ENCODE measurements at regions of chr7 and their contacts with region 1.

Region 1: DNA sequence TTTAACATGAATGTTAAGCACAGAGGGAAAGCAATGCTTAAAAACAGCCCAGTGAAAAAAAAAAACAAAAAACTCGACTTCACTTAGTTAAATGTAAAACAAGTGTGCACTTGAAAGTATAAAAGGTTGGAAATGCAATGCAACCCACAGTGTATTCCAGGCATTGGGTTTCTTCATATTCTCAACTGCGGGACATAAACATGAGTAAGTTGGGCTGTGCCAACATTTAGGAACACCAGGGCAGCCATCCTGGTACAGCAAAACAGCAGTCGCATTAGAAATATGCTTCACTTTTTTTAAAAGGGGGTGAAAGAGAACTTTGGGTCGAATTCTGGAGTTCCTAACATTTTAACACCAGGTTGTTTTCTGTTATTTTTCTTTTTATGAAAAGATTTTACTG is 937 bp downstream of the STEAP1 start:
- DNase-seq: no peak
- ATAC-seq: no peak
- H3K4me3 ChIP-seq: peak overlapping the region; percentile 13 to 82 (median 74); a peak in 3 of 6 replicates
- H3K27ac ChIP-seq: no peak overlapping the region
- H3K4me1 ChIP-seq: peaks cover 16% of the 10 kb centered on the region
- H3K27me3 ChIP-seq: no peaks in the 10 kb centered on the region
- CTCF ChIP-seq: no peak
- EP300 ChIP-seq: no peak
- POLR2A ChIP-seq: no peak
- RAD21 ChIP-seq: no peak

Region 2: GRCh38 chr7:90173127-90173844 is 18.1 kb after region 1 on chr7:
- CTCF ChIA-PET with region 1: no interaction called
- POLR2A ChIA-PET with region 1: interaction called, 14 read pairs
- in situ Hi-C with region 1: no loop called
- intact Hi-C with region 1: loop called (anchors 2 kb)
- DNase-seq: peak; percentile 77
- ATAC-seq: peak; percentile 98
- H3K4me3 ChIP-seq: peak overlapping the region; percentile 29 to 49 (median 49); a peak in 5 of 6 replicates
- H3K27ac ChIP-seq: peak overlapping the region; percentile 85
- H3K4me1 ChIP-seq: peaks cover 35% of the 10 kb centered on the region
- H3K27me3 ChIP-seq: no peaks in the 10 kb centered on the region
- CTCF ChIP-seq: no peak
- EP300 ChIP-seq: peak in 1 of 2 experiments; percentile 57; a peak in 2 of 4 replicates
- POLR2A ChIP-seq: no peak
- RAD21 ChIP-seq: no peak

Region 3: DNA sequence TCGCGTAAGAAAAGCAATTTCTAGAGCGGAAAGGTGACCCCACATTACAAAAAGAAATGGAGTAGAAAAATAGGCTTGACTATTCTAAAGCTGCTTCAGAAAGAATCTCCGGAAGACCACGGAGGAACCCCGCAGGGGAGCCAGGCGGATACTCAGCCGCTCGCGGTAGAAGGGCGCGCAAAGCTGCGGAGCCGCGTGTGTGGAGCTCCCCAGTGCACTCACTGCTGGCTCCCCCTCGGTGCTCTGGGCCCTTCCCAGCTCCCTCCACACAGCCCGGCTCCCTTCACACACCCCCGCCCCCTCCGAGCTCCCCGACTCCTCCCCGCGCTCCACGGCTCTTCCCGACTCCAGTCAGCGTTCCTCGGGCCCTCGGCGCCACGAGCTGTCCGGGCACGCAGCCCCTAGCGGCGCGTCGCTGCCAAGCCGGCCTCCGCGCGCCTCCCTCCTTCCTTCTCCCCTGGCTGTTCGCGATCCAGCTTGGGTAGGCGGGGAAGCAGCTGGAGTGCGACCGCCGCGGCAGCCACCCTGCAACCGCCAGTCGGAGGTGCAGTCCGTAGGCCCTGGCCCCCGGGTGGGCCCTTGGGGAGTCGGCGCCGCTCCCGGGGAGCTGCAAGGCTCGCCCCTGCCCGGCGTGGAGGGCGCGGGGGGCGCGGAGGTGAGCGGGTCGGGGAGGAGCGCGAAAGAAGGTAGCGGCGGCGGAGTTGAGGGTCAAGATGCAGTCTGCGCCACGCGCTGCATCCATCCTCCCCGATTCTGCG is 56.4 kb after region 1 on chr7 and contains the start of gene STEAP2:
- CTCF ChIA-PET with region 1: interaction called, 20 read pairs
- POLR2A ChIA-PET with region 1: interaction called, 51 read pairs
- in situ Hi-C with region 1: no loop called
- intact Hi-C with region 1: loop called (anchors 1 kb)
- DNase-seq: peak; percentile 81
- ATAC-seq: peak; percentile 98
- H3K4me3 ChIP-seq: peak within 1 kb of the TSS; percentile 65 to 87 (median 83)
- H3K27ac ChIP-seq: peak within 1 kb of the TSS; percentile 94
- H3K4me1 ChIP-seq: peaks cover 30% of the 10 kb centered on the region
- H3K27me3 ChIP-seq: peaks cover 0 to 5% of the 10 kb centered on the region in 2 experiments; a peak in 1 of 5 replicates
- CTCF ChIP-seq: peak; percentile 91
- EP300 ChIP-seq: peak in 1 of 2 experiments; percentile 41; a peak in 1 of 4 replicates
- POLR2A ChIP-seq: peak; percentile 80 to 86
- RAD21 ChIP-seq: peak; percentile 79
- total RNA-seq, gene STEAP2: 3.5 and 4.3 TPM in 2 replicates

Region 4: GRCh38 chr7:90262438-90262837 is 107.2 kb after region 1 on chr7:
- CTCF ChIA-PET with region 1: interaction called, 19 read pairs
- POLR2A ChIA-PET with region 1: interaction called, 4 read pairs
- in situ Hi-C with region 1: loop called (anchors 10 kb)
- intact Hi-C with region 1: loop called (anchors 1 kb)
- DNase-seq: no peak
- ATAC-seq: peak; percentile 74
- H3K4me3 ChIP-seq: no peak overlapping the region
- H3K27ac ChIP-seq: no peak overlapping the region
- H3K4me1 ChIP-seq: peaks cover 16% of the 10 kb centered on the region
- H3K27me3 ChIP-seq: no peaks in the 10 kb centered on the region
- CTCF ChIP-seq: peak; percentile 51
- EP300 ChIP-seq: no peak
- POLR2A ChIP-seq: no peak
- RAD21 ChIP-seq: no peak

Region 5: DNA sequence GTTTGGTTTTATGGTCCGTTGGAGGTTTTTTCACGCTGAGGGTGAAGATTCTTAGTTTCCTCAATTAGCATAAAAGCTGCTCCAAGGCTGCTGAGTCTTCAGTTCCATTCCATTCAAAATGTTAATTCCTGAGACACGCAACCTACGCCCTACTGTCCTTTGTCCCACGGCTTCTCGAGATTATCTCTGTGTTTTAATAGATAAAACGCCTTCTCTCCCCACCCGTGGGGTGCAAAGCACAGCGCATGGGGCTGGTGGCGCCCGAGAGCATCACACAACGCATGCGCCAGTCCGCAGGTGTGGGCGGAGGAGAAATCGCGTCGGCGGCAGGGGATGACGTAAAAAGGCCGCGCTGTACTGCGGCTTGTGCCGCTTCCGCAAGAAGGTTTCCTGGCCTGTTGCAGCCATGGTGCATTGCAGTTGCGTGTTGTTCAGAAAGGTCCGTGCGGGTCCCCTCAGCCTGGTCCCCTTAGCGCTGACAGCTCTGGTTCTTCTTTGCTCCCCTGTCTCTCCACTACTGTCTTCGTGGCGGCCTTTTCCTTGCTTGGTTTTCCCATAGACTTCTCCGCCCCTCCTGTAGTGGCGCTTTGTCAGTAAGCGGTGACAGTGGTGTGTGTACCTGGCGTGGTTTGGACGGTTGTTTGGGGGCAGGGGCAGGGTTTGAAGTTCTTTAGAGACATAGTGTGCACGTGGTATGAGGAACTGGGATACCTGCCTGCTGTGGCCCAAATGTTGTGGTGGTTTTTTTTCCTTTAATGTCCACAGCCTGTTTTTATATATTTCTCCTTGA is 191.3 kb after region 1 on chr7 and contains the start of gene GTPBP10:
- CTCF ChIA-PET with region 1: no interaction called
- POLR2A ChIA-PET with region 1: no interaction called
- in situ Hi-C with region 1: no loop called
- intact Hi-C with region 1: loop called (anchors 5 kb)
- DNase-seq: peak; percentile 87
- ATAC-seq: peak; percentile 91
- H3K4me3 ChIP-seq: peak within 1 kb of the TSS; percentile 82 to 97 (median 89)
- H3K27ac ChIP-seq: peak within 1 kb of the TSS; percentile 97
- H3K4me1 ChIP-seq: peaks cover 33% of the 10 kb centered on the region
- H3K27me3 ChIP-seq: no peaks in the 10 kb centered on the region; a peak in 1 of 5 replicates
- CTCF ChIP-seq: peak; percentile 87
- EP300 ChIP-seq: 0 out of 4 replicates have a peak, but pooled peaks of 1 of the 2 experiments have one; percentile 8
- POLR2A ChIP-seq: peak; percentile 97 to 98
- RAD21 ChIP-seq: peak; percentile 43
- total RNA-seq, gene GTPBP10: 38.7 and 54.6 TPM in 2 replicates

Region 6: GRCh38 chr7:90424720-90425119 is 269.5 kb after region 1 on chr7:
- CTCF ChIA-PET with region 1: interaction called, 9 read pairs
- POLR2A ChIA-PET with region 1: interaction called, 3 read pairs
- in situ Hi-C with region 1: loop called (anchors 10 kb)
- intact Hi-C with region 1: loop called (anchors 1 kb)
- DNase-seq: no peak
- ATAC-seq: no peak
- H3K4me3 ChIP-seq: no peak overlapping the region
- H3K27ac ChIP-seq: no peak overlapping the region
- H3K4me1 ChIP-seq: no peaks in the 10 kb centered on the region
- H3K27me3 ChIP-seq: no peaks in the 10 kb centered on the region
- CTCF ChIP-seq: no peak
- EP300 ChIP-seq: no peak
- POLR2A ChIP-seq: no peak
- RAD21 ChIP-seq: no peak

Region 7: DNA sequence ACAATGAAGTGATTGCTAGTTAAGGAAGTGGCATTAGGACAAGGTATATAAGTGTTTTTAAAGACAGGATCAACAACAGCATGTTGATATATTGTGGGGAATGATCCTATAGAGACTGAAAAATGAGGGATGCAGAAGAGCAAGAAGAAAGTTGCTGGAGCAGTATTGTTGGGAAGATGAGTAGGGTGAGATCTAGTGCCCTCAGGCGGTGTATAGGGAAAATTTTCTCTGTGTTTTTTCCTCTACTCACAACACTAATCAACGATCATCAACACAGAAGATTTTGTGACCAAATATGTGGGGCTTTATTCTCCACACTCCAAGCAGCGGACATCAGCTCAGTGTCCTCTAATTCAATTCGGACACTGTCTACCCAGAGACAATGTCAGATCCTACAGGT is 304.7 kb after region 1 on chr7:
- CTCF ChIA-PET with region 1: no interaction called
- POLR2A ChIA-PET with region 1: no interaction called
- in situ Hi-C with region 1: no loop called
- intact Hi-C with region 1: no loop called
- DNase-seq: peak; percentile 3
- ATAC-seq: peak; percentile 72
- H3K4me3 ChIP-seq: no peak overlapping the region
- H3K27ac ChIP-seq: no peak overlapping the region
- H3K4me1 ChIP-seq: peaks cover 5% of the 10 kb centered on the region
- H3K27me3 ChIP-seq: no peaks in the 10 kb centered on the region
- CTCF ChIP-seq: peak; percentile 43
- EP300 ChIP-seq: no peak
- POLR2A ChIP-seq: no peak
- RAD21 ChIP-seq: no peak

Measured in HepG2 (cell line).